ENCODE measurements at regions of chr9 and their contacts with region 1.

Region 1: DNA sequence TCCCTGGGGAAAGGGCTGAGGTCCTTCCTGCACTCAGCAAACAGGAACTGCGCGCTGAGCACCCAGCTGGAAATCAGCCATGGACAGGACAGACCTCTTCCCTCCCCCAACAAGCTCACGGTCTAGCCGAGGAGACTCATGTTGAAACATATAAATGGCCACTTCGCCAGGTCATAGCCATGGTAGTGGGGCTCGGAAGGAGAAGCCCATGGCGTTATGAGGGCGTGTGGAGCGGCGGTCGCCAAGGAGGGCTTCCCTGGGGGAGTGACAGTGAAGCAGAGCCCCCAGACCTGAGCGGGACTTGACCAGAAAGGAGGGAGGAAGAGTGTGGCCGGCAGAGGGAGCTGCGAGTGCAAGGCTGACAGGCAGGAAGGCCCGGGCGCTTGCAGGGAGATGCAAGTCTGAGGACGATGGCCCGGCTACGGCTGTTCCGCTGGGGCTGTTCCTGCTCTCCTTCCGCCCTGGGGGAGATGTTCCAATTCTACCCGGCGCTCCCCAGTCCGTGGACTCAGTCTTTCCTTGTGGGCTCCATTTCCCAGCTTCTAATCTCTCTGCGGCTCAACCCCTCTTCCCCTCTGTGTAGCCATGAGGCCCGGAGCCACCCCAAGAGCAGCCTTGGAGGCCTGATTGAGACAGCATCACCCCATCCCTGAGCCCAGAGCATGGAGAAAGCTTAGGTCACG is 43.9 kb upstream of the PRRC2B start:
- DNase-seq: peak; percentile 96
- ATAC-seq: peak; percentile 98
- H3K4me3 Mint-ChIP-seq: peak overlapping the region; percentile 16
- H3K27ac Mint-ChIP-seq: peak overlapping the region; percentile 65
- H3K4me1 Mint-ChIP-seq: peaks cover 9% of the 10 kb centered on the region
- H3K27me3 Mint-ChIP-seq: no peaks in the 10 kb centered on the region

Region 2: GRCh38 chr9:129850821-129851540 is 1499.0 kb before region 1 on chr9:
- CTCF ChIA-PET with region 1: no interaction called
- POLR2A ChIA-PET with region 1: no interaction called
- intact Hi-C with region 1: no loop called
- DNase-seq: no peak
- ATAC-seq: no peak
- H3K4me3 Mint-ChIP-seq: no peak overlapping the region
- H3K27ac Mint-ChIP-seq: no peak overlapping the region
- H3K4me1 Mint-ChIP-seq: peaks cover 35% of the 10 kb centered on the region
- H3K27me3 Mint-ChIP-seq: no peaks in the 10 kb centered on the region

Region 3: DNA sequence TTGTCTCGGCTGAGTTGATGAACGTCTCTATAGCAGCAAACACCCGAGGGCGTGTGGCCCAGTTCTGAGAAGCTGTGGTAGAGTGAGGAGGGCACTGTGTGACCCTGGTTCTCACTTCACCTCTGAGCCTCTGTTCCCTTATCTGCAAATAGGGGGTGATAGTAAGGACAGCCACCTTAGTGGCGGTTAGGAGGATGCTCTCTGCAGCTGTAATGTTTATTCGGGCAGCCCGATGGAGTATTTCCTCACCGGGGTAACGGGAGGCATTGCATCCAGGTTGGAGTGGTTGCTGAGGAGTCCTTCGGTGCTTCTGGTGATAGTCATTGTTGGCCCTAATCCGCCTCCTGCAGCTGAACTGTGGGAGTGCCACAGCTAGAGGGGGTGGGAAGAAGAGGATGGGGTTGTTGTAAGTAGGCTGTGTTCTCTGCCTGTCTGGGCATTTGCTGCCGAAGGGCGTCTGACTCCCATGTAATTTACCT is 57.7 kb after region 1 on chr9:
- CTCF ChIA-PET with region 1: interaction called, 7 read pairs
- POLR2A ChIA-PET with region 1: interaction called, 8 read pairs
- intact Hi-C with region 1: loop called (anchors 5 kb)
- DNase-seq: peak; percentile 63
- ATAC-seq: peak; percentile 47
- H3K4me3 Mint-ChIP-seq: peak overlapping the region; percentile 56
- H3K27ac Mint-ChIP-seq: peak overlapping the region; percentile 78
- H3K4me1 Mint-ChIP-seq: peaks cover 93% of the 10 kb centered on the region
- H3K27me3 Mint-ChIP-seq: no peaks in the 10 kb centered on the region

Region 4: GRCh38 chr9:131478421-131478868 is 128.4 kb after region 1 on chr9:
- CTCF ChIA-PET with region 1: interaction called, 6 read pairs
- POLR2A ChIA-PET with region 1: no interaction called
- intact Hi-C with region 1: loop called (anchors 1 to 5 kb)
- DNase-seq: peak; percentile 78
- ATAC-seq: peak; percentile 64
- H3K4me3 Mint-ChIP-seq: no peak overlapping the region
- H3K27ac Mint-ChIP-seq: no peak overlapping the region
- H3K4me1 Mint-ChIP-seq: peaks cover 5% of the 10 kb centered on the region
- H3K27me3 Mint-ChIP-seq: no peaks in the 10 kb centered on the region

Region 5: GRCh38 chr9:131559421-131560000 is 209.5 kb after region 1 on chr9:
- CTCF ChIA-PET with region 1: interaction called, 7 read pairs
- POLR2A ChIA-PET with region 1: no interaction called
- intact Hi-C with region 1: loop called in 1 of 2 experiments (anchors 2 kb)
- DNase-seq: no peak
- ATAC-seq: no peak
- H3K4me3 Mint-ChIP-seq: no peak overlapping the region
- H3K27ac Mint-ChIP-seq: no peak overlapping the region
- H3K4me1 Mint-ChIP-seq: no peaks in the 10 kb centered on the region
- H3K27me3 Mint-ChIP-seq: peaks cover 13% of the 10 kb centered on the region

Region 6: DNA sequence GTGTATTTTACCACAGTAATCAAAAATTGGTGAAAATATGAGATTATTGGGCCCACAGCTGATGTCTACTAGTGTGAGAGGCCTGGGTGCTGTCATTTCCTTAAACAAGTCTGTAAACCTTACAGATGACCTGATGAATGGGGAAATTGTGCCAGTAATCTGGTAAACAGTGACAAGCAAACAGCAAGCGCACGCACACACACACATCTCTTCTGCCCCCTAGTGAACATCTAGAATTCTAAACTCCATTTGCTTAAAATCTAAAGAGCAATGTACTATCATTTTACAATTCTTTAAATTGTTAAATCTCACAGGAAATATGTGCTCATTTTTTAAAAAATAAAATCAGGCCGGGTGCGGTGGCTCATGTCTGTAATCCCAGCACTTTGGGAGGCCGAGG is 397.3 kb after region 1 on chr9:
- CTCF ChIA-PET with region 1: interaction called, 3 read pairs
- POLR2A ChIA-PET with region 1: no interaction called
- intact Hi-C with region 1: loop called (anchors 1 to 5 kb)
- DNase-seq: no peak
- ATAC-seq: peak; percentile 50
- H3K4me3 Mint-ChIP-seq: no peak overlapping the region
- H3K27ac Mint-ChIP-seq: no peak overlapping the region
- H3K4me1 Mint-ChIP-seq: peaks cover 28% of the 10 kb centered on the region
- H3K27me3 Mint-ChIP-seq: no peaks in the 10 kb centered on the region

Region 7: GRCh38 chr9:132531187-132531586 is 1181.2 kb after region 1 on chr9:
- CTCF ChIA-PET with region 1: no interaction called
- POLR2A ChIA-PET with region 1: no interaction called
- intact Hi-C with region 1: no loop called
- DNase-seq: no peak
- ATAC-seq: no peak
- H3K4me3 Mint-ChIP-seq: no peak overlapping the region
- H3K27ac Mint-ChIP-seq: no peak overlapping the region
- H3K4me1 Mint-ChIP-seq: no peaks in the 10 kb centered on the region
- H3K27me3 Mint-ChIP-seq: peaks cover 15% of the 10 kb centered on the region